Transverse colon (tissue), 4 donors: ENCODE measurements at regions of chr6 and their contacts with region 1.

Region 1: GRCh38 chr6:90478789-90479602 is 107.9 kb downstream of the MAP3K7 start:
- DNase-seq: peak; percentile 89
- H3K4me3 ChIP-seq: no peak overlapping the region
- H3K27ac ChIP-seq: no peak overlapping the region
- H3K4me1 ChIP-seq: peaks cover 0 to 8% (median 2%) of the 10 kb centered on the region in 4 donors
- H3K27me3 ChIP-seq: no peaks in the 10 kb centered on the region
- CTCF ChIP-seq: peak; percentile 82 to 93 (median 91)
- EP300 ChIP-seq: no peak
- POLR2A ChIP-seq: no peak

Region 2: GRCh38 chr6:89432875-89433251 is 1046.1 kb before region 1 on chr6 and contains the start of gene ANKRD6:
- in situ Hi-C with region 1: loop called in 1 of 4 experiments (anchors 25 kb)
- intact Hi-C with region 1: no loop called
- DNase-seq: peak; percentile 84
- H3K4me3 ChIP-seq: peak within 1 kb of the TSS; percentile 74 to 86 (median 81)
- H3K27ac ChIP-seq: peak within 1 kb of the TSS; percentile 10 to 40 (median 18)
- H3K4me1 ChIP-seq: peaks cover 4 to 14% (median 6%) of the 10 kb centered on the region in 4 donors
- H3K27me3 ChIP-seq: peaks cover 6% of the 10 kb centered on the region
- CTCF ChIP-seq: peak; percentile 57 to 92 (median 86)
- EP300 ChIP-seq: no peak
- POLR2A ChIP-seq: no peak
- total RNA-seq, gene ANKRD6: 2.7 to 9.4 (median 6.6) TPM

Region 3: DNA sequence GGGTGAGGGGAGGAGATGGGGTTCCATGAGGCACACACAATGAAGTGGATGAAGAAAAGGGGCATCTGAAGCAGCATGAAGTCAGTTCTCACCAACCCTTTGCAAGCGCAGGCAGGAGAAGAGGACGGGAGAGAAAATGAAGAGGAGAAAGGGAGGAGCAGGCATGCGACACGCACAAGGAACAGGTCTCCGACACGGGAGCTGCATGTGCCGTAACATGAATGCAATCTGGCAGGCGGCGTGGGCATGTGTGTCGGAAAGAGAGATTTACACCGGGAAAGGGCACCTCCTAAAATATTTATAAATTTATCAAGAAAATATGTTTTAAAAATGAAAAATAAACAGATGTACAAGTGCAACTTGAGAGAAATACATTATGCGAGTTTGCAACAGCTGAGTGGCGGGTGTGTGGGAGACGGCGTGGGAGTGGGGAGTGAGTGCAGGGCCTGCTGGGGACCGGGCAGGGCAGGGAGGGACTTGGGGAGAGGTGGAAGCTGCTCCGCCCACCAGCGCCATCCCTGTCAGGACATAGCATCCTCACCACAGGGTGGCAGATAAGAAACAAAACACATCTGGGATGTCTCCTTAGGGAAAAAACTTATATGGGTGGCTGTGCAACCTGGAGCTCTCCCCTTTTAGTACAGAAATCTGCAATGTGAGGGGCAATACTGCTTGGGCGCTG is 544.2 kb before region 1 on chr6:
- in situ Hi-C with region 1: loop called in 3 of 4 experiments (anchors 5 to 10 kb)
- intact Hi-C with region 1: loop called (anchors 5 kb)
- DNase-seq: no peak
- H3K4me3 ChIP-seq: no peak overlapping the region
- H3K27ac ChIP-seq: no peak overlapping the region
- H3K4me1 ChIP-seq: no peaks in the 10 kb centered on the region
- H3K27me3 ChIP-seq: no peaks in the 10 kb centered on the region
- CTCF ChIP-seq: no peak
- EP300 ChIP-seq: no peak
- POLR2A ChIP-seq: no peak

Region 4: GRCh38 chr6:89940225-89941027 is 538.6 kb before region 1 on chr6:
- in situ Hi-C with region 1: loop called in 3 of 4 experiments (anchors 5 to 10 kb)
- intact Hi-C with region 1: loop called (anchors 5 kb)
- DNase-seq: peak; percentile 71
- H3K4me3 ChIP-seq: no peak overlapping the region
- H3K27ac ChIP-seq: no peak overlapping the region
- H3K4me1 ChIP-seq: peaks cover 0 to 20% (median 10%) of the 10 kb centered on the region in 4 donors
- H3K27me3 ChIP-seq: no peaks in the 10 kb centered on the region
- CTCF ChIP-seq: peak; percentile 61 to 75 (median 63)
- EP300 ChIP-seq: no peak
- POLR2A ChIP-seq: no peak

Region 5: GRCh38 chr6:89970609-89971337 is 508.2 kb before region 1 on chr6:
- in situ Hi-C with region 1: loop called in 1 of 4 experiments (anchors 10 kb)
- intact Hi-C with region 1: no loop called
- DNase-seq: no peak
- H3K4me3 ChIP-seq: no peak overlapping the region
- H3K27ac ChIP-seq: no peak overlapping the region
- H3K4me1 ChIP-seq: no peaks in the 10 kb centered on the region
- H3K27me3 ChIP-seq: no peaks in the 10 kb centered on the region
- CTCF ChIP-seq: peak; percentile 52 to 71 (median 58)
- EP300 ChIP-seq: no peak
- POLR2A ChIP-seq: no peak

Region 6: DNA sequence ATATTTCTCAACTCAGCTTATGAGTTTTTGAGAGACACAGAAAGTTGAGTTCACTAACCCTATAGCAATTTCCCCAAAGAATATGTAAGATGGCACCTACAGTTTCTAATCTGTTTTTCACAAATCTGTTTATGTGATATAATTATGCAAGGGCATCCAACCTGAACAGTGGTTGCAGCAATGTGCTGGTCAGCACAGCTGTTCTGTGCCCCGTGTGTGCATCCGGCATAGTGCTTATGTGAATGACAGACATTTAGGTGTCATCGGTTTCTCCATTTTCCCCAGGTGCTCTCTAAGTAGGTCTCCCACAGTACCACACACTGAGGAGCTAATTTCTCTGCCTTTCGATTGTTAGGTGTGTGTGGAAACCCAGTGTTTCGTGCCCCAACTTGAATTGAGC is 174.7 kb before region 1 on chr6:
- in situ Hi-C with region 1: loop called in 1 of 4 experiments (anchors 10 kb)
- intact Hi-C with region 1: no loop called
- DNase-seq: no peak
- H3K4me3 ChIP-seq: no peak overlapping the region
- H3K27ac ChIP-seq: no peak overlapping the region
- H3K4me1 ChIP-seq: no peaks in the 10 kb centered on the region
- H3K27me3 ChIP-seq: peaks cover 16% of the 10 kb centered on the region
- CTCF ChIP-seq: no peak
- EP300 ChIP-seq: no peak
- POLR2A ChIP-seq: no peak

Region 7: DNA sequence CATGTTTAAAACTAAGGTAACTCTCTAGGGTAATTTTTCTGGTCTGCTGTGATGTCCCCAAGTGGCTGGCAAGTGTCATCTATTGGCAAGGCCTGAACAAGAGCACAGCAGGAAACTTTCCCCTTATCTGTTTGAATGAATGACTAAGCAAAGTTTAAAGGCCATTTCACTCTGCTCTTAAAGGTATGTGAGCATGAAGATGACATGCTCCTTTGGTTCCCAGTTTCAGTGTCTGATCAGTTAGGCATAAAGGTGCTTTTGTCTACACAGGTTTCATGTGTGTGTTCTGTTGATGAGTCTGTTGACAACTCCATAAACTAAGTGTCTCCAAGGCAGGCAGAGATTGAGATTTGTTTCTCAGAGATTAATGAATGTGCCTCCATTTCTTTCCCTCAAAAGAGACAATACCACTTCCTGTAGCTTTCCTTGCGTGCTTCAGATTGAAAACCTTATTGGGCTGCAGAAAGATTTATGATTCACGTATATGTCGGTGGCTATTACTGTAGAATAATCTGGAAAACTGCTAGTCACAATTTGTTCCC is 23.9 kb after region 1 on chr6:
- in situ Hi-C with region 1: no loop called
- intact Hi-C with region 1: no loop called
- DNase-seq: no peak
- H3K4me3 ChIP-seq: no peak overlapping the region
- H3K27ac ChIP-seq: no peak overlapping the region
- H3K4me1 ChIP-seq: peaks cover 0 to 5% (median 0%) of the 10 kb centered on the region in 4 donors
- H3K27me3 ChIP-seq: no peaks in the 10 kb centered on the region
- CTCF ChIP-seq: no peak
- EP300 ChIP-seq: no peak
- POLR2A ChIP-seq: no peak